ENCODE measurements at regions of chr5 and their contacts with region 1.

Region 1: DNA sequence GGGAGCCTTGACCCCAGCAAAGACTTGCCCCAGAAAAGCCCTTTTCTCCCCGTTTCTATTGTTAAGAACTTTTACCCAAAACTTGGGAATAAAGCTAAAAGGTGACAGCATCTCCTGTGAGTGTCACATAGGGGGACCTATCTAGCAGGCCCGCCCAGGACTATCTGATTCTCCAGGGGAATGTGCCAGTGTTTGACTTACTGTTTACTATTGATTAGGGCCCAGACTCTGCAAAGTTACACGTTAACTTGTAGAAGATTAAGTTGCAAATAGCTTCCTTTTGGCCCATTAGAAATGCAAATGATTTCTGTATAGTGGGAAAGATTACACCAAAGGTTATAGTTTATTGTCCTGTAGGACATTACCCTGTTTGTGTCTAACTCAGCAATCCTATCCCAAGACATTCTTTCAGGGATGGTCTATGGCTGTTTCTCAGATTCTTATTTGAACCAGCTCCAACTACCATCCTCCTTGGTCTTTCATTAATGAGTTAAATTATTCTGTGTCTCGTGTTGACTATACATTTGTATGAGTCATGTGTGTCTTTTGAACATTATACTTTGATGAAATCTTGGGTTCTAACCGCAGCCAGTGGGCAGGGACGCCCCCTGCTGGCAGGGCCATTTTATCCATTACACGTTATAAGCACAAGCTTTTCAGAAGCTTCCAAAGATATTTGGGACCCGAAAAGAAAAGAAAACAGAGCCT is 60.7 kb downstream of the HRH2 start:
- DNase-seq: no peak
- H3K4me3 ChIP-seq: no peak overlapping the region
- H3K27ac ChIP-seq: no peak overlapping the region
- H3K4me1 ChIP-seq: no peaks in the 10 kb centered on the region
- H3K27me3 ChIP-seq: no peaks in the 10 kb centered on the region
- CTCF ChIP-seq: no peak
- EP300 ChIP-seq: no peak
- POLR2A ChIP-seq: no peak

Region 2: GRCh38 chr5:175535796-175536195 is 182.8 kb before region 1 on chr5:
- intact Hi-C with region 1: loop called in 1 of 4 experiments (anchors 5 kb)
- DNase-seq: no peak
- H3K4me3 ChIP-seq: no peak overlapping the region
- H3K27ac ChIP-seq: no peak overlapping the region
- H3K4me1 ChIP-seq: no peaks in the 10 kb centered on the region
- H3K27me3 ChIP-seq: no peaks in the 10 kb centered on the region
- CTCF ChIP-seq: no peak
- EP300 ChIP-seq: no peak
- POLR2A ChIP-seq: no peak

Measured in ovary (tissue), 10 donors.